B cell (primary cell): ENCODE measurements at regions of chr20 and their contacts with region 1.

Region 1: GRCh38 chr20:49384437-49385088 is 97.9 kb downstream of the KCNB1 start:
- DNase-seq: peak; percentile 34
- ATAC-seq: no peak
- H3K4me3 ChIP-seq: no peak overlapping the region
- H3K4me3 Mint-ChIP-seq: no peak overlapping the region
- H3K27ac ChIP-seq: no peak overlapping the region
- H3K27ac Mint-ChIP-seq: no peak overlapping the region
- H3K4me1 ChIP-seq: no peaks in the 10 kb centered on the region
- H3K4me1 Mint-ChIP-seq: no peaks in the 10 kb centered on the region
- H3K27me3 ChIP-seq: peaks cover 0 to 14% (median 3%) of the 10 kb centered on the region in 4 experiments
- H3K27me3 Mint-ChIP-seq: peaks cover 54% of the 10 kb centered on the region
- CTCF ChIP-seq: peak; percentile 47

Region 2: GRCh38 chr20:49888345-49888966 is 503.9 kb after region 1 on chr20:
- CTCF ChIA-PET with region 1: no interaction called
- POLR2A ChIA-PET with region 1: no interaction called
- intact Hi-C with region 1: loop called (anchors 5 kb)
- DNase-seq: peak; percentile 71
- ATAC-seq: peak; percentile 66
- H3K4me3 ChIP-seq: no peak overlapping the region
- H3K4me3 Mint-ChIP-seq: no peak overlapping the region
- H3K27ac ChIP-seq: no peak overlapping the region
- H3K27ac Mint-ChIP-seq: peak overlapping the region; percentile 43
- H3K4me1 ChIP-seq: peaks cover 0 to 1% of the 10 kb centered on the region in 2 donors
- H3K4me1 Mint-ChIP-seq: peaks cover 4% of the 10 kb centered on the region
- H3K27me3 ChIP-seq: no peaks in the 10 kb centered on the region
- H3K27me3 Mint-ChIP-seq: no peaks in the 10 kb centered on the region
- CTCF ChIP-seq: peak; percentile 77